HEK293 (cell line): ENCODE measurements at regions of chr16 and their contacts with region 1.

Region 1: GRCh38 chr16:74666425-74667254 is at the start of gene RFWD3:
- H3K4me3 ChIP-seq: peak within 1 kb of the TSS; percentile 92
- H3K27ac ChIP-seq: peak within 1 kb of the TSS; percentile 87
- H3K4me1 ChIP-seq: no peaks in the 10 kb centered on the region; the same call in 1 of the 2 replicates
- CTCF ChIP-seq: peak; percentile 51

Region 2: GRCh38 chr16:74372953-74373846 is 293.4 kb before region 1 on chr16:
- CTCF ChIA-PET with region 1: no interaction called
- POLR2A ChIA-PET with region 1: no interaction called
- H3K4me3 ChIP-seq: no peak overlapping the region
- H3K27ac ChIP-seq: no peak overlapping the region
- H3K4me1 ChIP-seq: no peaks in the 10 kb centered on the region
- CTCF ChIP-seq: no peak

Region 3: DNA sequence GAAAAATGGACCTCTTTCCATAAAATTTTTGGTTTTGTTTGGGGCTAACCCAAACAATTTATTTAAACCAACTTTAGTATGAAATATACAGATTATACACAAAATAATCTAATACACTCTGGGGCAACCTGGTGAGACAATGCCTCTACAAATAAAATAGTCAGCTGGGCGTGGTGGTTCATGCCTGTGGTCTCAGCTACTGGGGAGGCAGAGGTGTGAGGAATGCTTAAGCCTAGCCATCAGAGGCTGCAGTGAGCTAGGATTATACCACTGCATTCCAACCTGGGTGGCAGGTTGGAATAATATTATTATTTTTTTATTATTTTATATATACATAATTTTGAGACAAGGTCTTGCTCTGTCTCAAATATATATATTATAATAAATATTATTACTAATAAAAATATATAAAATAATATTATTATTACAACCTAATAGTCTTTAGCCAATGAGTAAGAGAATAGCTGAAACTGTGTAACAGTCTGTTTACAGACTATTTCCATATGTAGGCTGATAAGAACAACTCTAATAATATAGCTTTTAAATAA is 110.2 kb before region 1 on chr16:
- CTCF ChIA-PET with region 1: no interaction called
- POLR2A ChIA-PET with region 1: no interaction called
- H3K4me3 ChIP-seq: no peak overlapping the region
- H3K27ac ChIP-seq: no peak overlapping the region
- H3K4me1 ChIP-seq: no peaks in the 10 kb centered on the region
- CTCF ChIP-seq: no peak

Region 4: DNA sequence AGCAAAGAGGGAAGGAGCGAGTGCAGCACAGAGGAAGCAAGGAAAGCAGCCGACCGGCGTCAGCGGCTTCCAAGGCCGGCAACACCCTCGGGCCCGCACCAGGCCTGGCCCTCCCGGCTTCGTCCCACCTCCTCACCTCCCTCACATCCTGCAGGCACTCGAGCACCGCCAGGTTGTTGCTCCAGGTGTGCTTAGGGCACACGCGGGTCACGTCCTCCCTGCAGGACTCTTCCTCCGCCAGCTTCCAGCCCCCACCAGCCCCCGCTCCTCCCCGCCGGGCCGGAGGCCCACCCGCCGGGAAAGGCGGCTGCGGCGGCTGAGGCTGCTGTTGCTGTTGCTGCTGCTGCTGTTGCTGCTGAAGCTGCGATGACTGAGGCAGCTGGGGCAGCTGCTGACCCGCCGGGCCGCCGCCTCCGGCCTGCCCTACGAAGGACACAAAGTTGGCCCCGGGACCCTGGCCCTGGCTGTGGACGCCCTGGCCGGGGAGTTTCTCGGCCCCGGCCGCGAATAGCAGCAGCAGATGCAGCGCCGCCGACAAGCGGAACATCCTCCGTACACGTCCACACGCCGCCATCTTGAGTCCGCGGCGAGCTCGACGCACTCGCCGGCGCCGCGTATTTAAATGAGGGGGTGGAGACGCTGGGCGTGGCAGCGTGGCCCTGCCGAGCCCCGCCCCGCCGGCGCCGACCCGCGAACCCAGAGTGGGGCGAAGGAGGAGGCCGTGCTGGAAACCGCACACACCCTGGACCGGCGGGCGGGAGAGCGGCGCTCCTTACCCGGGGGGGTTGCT is 59.9 kb before region 1 on chr16 and contains the start of gene GLG1:
- CTCF ChIA-PET with region 1: no interaction called
- POLR2A ChIA-PET with region 1: interaction called, 10 read pairs
- H3K4me3 ChIP-seq: peak within 1 kb of the TSS; percentile 93
- H3K27ac ChIP-seq: peak within 1 kb of the TSS; percentile 85
- H3K4me1 ChIP-seq: peaks cover 24% of the 10 kb centered on the region
- CTCF ChIP-seq: peak; percentile 45

Region 5: GRCh38 chr16:74641969-74642368 is 24.7 kb before region 1 on chr16:
- CTCF ChIA-PET with region 1: no interaction called
- POLR2A ChIA-PET with region 1: no interaction called
- H3K4me3 ChIP-seq: no peak overlapping the region
- H3K27ac ChIP-seq: no peak overlapping the region
- H3K4me1 ChIP-seq: no peaks in the 10 kb centered on the region
- CTCF ChIP-seq: no peak

Region 6: DNA sequence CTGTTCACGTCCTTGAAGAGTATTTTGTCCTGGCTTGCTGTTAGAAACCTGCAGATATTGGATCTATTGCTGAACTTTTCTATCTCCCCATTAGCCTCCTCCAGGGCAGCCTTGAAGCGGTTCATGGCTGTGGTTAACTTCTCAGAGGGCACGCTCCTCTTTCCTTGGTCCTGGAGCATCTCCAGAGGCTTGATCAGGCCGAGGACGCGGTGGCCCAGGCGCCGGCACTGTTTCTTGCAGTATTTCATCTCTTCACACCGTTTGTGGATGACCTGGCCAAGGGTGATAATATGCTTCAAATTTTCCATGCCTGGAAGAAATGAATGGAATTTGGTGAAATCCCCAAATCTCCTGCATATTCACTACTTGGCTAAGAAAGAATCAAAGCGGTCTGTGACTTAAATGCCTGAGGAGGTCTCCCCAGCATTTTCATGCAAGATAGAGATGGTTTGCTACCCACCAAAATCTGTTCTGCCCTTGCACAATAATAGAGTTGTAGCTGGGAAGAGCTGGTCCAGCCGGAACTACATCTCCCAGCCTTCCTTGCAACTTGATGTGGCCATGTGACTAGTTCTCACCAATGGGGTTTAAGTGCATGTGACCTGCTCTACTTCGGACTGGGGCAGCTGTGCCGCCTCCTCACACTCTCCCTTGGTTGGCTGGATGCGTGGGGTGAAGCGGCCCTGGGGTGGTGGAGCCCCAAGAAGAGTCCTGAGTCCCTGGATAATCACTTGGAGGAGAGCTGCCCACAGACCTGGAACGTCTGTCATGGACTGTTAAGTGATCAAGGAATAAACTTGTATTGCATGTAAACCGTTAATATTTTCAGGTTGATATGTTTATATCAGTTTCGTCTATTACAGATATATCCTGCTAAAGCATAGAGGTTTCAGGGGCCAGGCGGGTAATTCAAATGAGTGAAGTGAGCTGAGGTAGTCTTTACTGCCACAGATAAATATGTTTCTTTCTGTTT is 29.1 kb after region 1 on chr16:
- CTCF ChIA-PET with region 1: no interaction called
- POLR2A ChIA-PET with region 1: interaction called, 13 read pairs
- H3K4me3 ChIP-seq: peak overlapping the region; percentile 41
- H3K27ac ChIP-seq: no peak overlapping the region
- H3K4me1 ChIP-seq: no peaks in the 10 kb centered on the region
- CTCF ChIP-seq: no peak